Posterior vena cava (tissue), 2 donors: ENCODE measurements at regions of chr13 and their contacts with region 1.

Region 1: GRCh38 chr13:34347808-34348573 is 530.0 kb downstream of the RFC3 start:
- DNase-seq: no peak

Region 2: DNA sequence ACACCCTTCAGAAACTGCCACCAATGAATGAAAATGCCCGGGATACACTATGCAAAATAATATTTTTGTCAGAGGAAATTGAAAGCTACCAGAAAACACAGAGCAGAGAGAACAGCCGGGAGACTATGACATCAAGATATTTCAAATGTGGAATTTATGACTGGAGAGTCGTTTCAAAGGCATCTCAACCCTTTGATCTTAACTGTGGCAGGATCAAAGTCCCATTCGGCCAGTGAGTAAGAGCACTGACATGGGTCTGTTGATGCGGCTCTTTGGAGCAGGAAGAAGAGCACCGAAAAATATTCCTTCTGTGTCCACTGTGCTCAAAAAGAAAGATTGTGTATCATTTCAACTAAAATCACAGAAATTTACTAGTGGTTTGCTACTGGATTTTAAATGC is 328.1 kb before region 1 on chr13:
- intact Hi-C with region 1: no loop called
- DNase-seq: no peak

Region 3: DNA sequence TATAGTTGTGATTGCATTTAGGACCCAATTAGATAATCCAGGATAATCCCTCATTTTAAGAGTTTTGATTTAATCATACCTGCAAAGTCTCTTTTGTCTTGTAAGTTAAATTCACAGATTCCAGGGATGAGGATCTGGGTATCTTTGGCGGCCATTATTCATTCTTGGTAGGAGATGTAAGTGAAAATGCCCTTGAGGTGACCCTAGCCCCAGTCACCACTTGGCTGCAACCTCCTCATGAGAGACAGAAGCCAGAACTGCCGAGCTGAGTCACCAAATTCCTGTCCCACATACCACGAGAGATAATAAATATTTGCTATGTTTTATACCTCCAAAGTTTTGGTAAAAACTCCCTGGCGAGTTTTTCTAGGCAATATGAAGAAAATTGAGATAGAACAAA is 140.7 kb before region 1 on chr13:
- intact Hi-C with region 1: no loop called
- DNase-seq: no peak

Region 4: DNA sequence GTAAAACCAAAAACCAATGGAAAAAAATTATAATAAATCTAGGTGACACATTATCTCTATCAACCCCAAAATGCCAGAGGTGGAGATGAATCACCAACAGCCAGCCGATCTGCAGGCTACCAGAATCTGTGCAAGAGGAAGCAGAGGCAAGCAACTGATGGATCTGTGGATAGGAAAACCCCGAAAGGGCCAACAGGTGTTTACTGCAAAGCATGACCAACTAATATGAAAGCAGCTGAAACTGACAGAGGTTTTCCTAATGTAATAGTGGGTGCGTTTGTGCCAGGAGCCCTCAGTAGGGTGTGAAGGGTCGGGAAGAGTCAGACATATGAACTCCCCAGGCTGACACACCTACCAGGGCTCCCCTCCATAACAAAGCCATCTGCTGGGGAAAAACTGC is 24.6 kb after region 1 on chr13:
- intact Hi-C with region 1: loop called in 1 of 2 experiments (anchors 1 kb)
- DNase-seq: no peak

Region 5: DNA sequence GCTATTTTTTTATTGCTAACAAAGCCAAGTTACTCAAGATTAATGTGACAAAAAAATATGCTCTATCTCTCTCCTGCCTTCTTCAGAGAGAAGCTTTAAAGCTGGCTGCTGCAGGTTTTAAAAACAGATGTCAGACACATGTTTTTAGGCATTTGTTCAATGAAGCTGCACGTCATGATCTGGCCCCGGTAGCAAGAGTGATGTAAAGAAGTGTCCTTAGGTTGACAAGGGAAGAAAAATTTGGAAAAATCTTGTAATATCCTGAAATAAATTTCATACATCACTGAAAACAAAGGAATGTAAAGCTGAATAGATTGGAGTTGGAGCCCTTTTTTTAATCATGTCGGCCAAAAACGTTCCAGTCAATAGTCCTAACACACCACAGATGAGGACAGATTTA is 62.7 kb after region 1 on chr13:
- intact Hi-C with region 1: loop called in 1 of 2 experiments (anchors 2 kb)
- DNase-seq: no peak